Ovary (tissue), 10 donors: ENCODE measurements at regions of chr12 and their contacts with region 1.

Region 1: DNA sequence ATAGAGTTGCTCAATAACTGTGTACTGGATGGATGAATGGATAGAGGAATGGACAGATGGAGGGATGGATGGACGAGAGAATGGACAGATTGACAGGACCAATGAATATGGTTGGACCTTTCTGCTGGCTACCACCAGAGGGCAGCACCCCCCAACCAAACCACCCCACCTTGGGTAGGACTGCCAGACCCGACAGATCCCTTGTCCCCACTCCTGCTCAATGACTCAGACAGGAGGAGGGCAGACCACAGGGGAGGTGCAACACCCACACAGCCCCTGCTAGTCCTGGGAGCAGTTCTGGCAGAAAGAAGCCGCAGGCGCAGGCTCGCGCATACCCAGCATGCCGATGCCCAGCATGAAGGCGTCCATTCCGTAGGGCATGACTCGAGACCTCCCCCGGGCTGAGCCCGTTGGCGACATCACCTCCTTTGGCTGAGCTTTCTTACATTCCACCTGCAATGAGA is 12.4 kb downstream of the MSI1 start:
- DNase-seq: peak; percentile 60 to 77 (median 75)
- H3K4me3 ChIP-seq: no peak overlapping the region
- H3K27ac ChIP-seq: no peak overlapping the region
- H3K4me1 ChIP-seq: no peaks in the 10 kb centered on the region
- H3K27me3 ChIP-seq: no peaks in the 10 kb centered on the region
- CTCF ChIP-seq: peak; percentile 70 to 82 (median 75)
- EP300 ChIP-seq: no peak
- POLR2A ChIP-seq: no peak

Region 2: GRCh38 chr12:120421701-120422100 is 65.1 kb after region 1 on chr12:
- intact Hi-C with region 1: loop called in 3 of 4 experiments (anchors 5 to 10 kb)
- DNase-seq: no peak
- H3K4me3 ChIP-seq: no peak overlapping the region
- H3K27ac ChIP-seq: no peak overlapping the region
- H3K4me1 ChIP-seq: no peaks in the 10 kb centered on the region
- H3K27me3 ChIP-seq: no peaks in the 10 kb centered on the region
- CTCF ChIP-seq: no peak
- EP300 ChIP-seq: no peak
- POLR2A ChIP-seq: no peak

Region 3: DNA sequence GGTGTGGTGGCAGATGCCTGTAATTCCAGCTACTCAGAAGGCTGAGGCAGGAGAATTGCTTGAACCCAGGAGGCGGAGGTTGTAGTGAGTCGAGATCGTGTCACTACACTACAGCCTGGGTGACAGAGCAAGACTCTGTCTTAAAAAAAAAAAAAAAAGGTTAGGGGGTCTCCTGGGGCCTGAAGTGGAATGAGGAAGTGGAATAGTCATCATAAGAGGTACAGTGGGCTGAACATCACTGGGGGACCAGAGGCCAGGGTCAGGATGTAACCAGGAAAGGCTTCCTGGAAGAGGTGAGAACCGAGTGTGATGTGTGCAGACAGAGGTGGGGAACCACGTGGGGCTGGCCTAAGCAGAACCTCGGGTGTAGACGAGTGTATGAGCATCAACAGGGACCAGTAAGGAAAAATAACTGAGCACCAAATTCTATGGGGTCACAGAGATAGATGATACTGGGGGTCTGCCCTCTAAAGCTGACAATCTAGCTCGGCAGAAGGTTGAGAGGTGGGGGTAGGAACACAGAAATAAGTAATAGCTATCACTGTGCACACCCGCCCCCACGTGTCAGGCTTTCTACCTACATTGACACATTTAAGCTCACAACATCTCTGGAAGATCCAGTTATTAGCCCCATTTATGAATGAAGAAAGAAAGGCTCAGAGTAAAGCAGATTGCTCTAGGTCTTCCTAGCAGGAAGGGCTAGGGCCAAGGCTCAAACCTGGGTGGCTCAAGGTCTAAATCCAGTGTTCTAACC is 76.3 kb after region 1 on chr12:
- intact Hi-C with region 1: loop called in 2 of 4 experiments (anchors 5 kb)
- DNase-seq: no peak
- H3K4me3 ChIP-seq: no peak overlapping the region
- H3K27ac ChIP-seq: no peak overlapping the region
- H3K4me1 ChIP-seq: no peaks in the 10 kb centered on the region
- H3K27me3 ChIP-seq: no peaks in the 10 kb centered on the region
- CTCF ChIP-seq: no peak
- EP300 ChIP-seq: no peak
- POLR2A ChIP-seq: no peak

Region 4: DNA sequence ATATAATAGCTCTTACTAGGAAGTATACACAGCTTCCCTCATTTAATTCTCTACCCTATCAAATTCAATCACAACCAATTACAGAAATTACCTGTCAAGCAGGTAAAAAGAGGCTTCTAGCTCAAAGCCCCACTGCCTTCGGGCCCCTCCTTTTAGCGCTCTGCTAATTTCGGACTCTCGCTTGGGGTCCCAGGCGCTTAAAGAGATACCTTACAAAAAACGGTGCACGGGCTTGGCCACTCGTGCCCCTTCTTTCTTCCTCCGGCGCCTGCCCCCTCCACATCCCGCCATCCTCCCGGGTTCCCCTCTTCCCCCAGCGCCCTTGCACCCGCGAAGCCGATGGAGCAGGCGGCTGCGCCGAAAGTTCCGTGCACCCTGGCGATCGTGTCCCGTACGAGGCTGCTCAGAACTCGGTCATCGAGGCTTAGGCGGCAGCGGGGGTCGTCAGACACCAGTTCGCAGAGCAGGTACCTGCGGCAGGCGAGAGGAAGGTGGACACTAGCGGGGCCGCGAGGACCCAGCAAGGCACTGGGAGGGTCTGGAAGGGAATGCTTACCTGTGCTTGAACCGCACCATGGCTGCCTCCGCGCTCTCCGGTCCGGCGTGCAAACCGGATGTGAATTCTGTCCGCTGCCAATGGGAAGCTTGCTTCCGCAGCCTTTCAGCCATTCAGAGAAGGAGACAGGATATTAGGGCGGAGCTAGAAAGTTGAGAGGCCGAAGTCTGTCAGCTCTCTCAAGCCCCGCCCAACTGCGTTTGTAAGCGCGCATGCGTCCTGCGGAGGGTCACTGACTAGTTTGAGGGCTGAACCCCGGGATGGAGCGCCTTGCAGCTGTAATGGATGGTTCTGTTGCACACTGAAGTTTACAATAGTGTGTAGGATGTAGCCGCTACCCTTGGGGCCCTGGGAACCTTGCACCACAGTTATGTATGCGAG is 224.5 kb after region 1 on chr12 and contains the start of gene POP5:
- intact Hi-C with region 1: no loop called
- DNase-seq: peak; percentile 93 to 96 (median 94)
- H3K4me3 ChIP-seq: peak within 1 kb of the TSS; percentile 48
- H3K27ac ChIP-seq: no peak within 1 kb of the TSS
- H3K4me1 ChIP-seq: no peaks in the 10 kb centered on the region
- H3K27me3 ChIP-seq: no peaks in the 10 kb centered on the region
- CTCF ChIP-seq: no peak
- EP300 ChIP-seq: no peak
- POLR2A ChIP-seq: no peak
- total RNA-seq, gene POP5: 13.6 to 29.5 (median 22.5) TPM